A549 (cell line): ENCODE measurements at regions of chr3 and their contacts with region 1.

Region 1: DNA sequence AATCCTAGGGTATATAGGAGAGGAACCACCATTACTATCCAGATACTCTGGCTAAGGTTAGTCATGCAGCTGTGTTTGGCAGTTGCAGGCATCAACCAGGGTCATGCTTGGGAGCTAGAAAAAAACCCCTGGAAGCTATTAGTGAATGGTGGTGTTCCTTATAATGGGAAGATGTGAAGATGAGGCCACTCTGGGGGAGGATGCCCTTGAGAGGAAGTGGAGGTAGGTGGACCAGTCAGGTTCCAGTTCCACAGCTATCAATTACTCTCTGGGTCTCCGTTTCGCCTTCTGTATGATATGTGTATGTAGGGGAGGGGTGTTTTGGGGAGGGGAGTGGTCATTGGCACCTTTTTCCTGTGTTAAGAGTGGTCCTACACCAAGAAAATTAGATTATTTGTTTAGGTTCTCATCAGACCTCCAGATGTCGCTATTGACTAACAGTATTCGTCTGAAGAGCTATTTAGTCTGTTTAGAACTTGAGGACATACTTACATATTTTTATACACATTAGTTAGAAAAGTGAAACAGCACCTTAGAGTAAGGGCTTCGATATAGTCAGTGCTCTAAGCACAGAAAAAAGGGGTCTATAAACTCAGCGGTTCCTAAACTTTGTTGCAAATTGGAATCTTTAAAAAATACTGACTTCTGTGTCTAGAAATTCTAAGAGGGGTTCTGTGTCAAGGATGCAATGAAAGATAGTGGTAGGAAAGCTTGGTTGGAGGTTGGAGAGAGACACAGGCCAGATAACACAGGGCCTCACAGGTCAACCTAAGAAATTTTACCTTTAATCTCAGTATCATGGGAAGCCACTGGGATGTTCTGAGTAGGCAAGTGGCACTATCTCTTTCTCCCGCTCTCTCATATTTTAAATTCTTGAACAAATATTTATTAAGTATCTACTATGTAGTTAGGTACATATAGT is 9.1 kb upstream of the HPS3 start:
- DNase-seq: peak; percentile 73 to 80
- ATAC-seq: peak; percentile 83 to 95
- H3K4me3 ChIP-seq: no peak overlapping the region
- H3K27ac ChIP-seq: peak overlapping the region; percentile 61 to 73
- H3K4me1 ChIP-seq: peaks cover 12% of the 10 kb centered on the region
- CTCF ChIP-seq: peak; percentile 94
- EP300 ChIP-seq: no peak
- POLR2A ChIP-seq: no peak
- RAD21 ChIP-seq: peak; percentile 95 to 97

Region 2: DNA sequence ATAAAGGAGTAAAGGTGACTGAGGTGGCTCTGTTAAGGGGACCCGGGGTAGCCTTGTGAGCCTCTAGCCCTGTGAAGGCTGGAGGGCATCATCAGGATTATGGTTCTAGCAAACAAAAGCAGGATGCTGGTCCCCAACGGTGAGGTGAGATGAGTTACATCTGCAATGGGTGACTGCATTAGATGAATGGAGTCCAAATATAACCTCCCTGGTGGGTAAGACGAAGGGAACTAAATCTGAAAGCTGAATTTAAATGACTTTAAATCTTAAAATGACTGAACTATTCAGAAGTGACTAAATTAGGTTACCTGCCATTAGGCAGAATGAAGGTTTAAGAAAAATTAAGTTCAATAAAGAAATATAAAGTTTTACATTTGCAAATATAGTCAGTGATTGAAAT is 29.4 kb before region 1 on chr3:
- CTCF ChIA-PET with region 1: interaction called, 11 read pairs
- POLR2A ChIA-PET with region 1: no interaction called
- DNase-seq: no peak
- ATAC-seq: no peak
- H3K4me3 ChIP-seq: no peak overlapping the region
- H3K27ac ChIP-seq: no peak overlapping the region
- H3K4me1 ChIP-seq: no peaks in the 10 kb centered on the region
- CTCF ChIP-seq: no peak
- EP300 ChIP-seq: no peak
- POLR2A ChIP-seq: no peak
- RAD21 ChIP-seq: no peak

Region 3: DNA sequence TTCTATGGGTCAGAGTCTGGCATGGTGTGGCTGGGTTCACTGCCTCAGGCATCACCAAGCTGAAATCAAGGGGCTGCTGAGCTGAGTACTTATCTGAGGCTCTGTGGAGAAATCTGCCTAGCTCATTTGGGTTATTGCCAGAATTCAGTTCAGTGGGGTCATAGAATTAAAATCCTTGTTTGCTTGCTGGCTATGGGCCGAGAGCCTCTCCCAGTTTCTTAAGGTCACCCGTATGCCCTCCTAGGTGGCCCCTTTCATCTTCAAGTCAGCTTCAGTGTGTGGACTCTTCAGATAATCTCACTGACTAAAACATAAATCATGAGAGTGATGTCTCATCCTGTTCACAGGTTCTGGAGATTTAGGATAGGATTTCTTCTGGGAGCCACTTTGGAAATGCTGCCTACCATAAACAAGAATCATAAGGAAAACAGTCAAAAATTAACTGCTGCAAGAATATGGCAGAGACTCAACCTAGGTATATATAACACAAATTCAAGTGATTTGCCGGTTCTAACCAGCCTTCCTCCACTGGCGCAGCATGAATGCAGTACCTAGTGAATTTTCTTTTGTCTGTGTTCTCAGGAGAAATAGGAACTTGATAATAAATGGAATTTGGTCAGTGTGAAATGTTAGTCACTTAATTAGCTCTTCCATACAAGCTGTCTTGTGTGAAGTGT is 96.0 kb after region 1 on chr3:
- CTCF ChIA-PET with region 1: interaction called, 10 read pairs
- POLR2A ChIA-PET with region 1: no interaction called
- DNase-seq: peak in 1 of 2 experiments; percentile 93
- ATAC-seq: peak; percentile 82 to 91
- H3K4me3 ChIP-seq: no peak overlapping the region
- H3K27ac ChIP-seq: peak overlapping the region; percentile 62 to 86
- H3K4me1 ChIP-seq: peaks cover 43% of the 10 kb centered on the region
- CTCF ChIP-seq: no peak
- EP300 ChIP-seq: peak; percentile 80 to 92; a peak in 3 of 5 replicates
- POLR2A ChIP-seq: no peak
- RAD21 ChIP-seq: peak in 1 of 2 experiments; percentile 48; a peak in 2 of 5 replicates

Region 4: GRCh38 chr3:149273096-149273751 is 152.9 kb after region 1 on chr3:
- CTCF ChIA-PET with region 1: interaction called, 114 read pairs
- POLR2A ChIA-PET with region 1: no interaction called
- DNase-seq: peak; percentile 62 to 92
- ATAC-seq: peak; percentile 79 to 90
- H3K4me3 ChIP-seq: no peak overlapping the region
- H3K27ac ChIP-seq: peak overlapping the region; percentile 56 to 77
- H3K4me1 ChIP-seq: peaks cover 25% of the 10 kb centered on the region
- CTCF ChIP-seq: peak; percentile 100
- EP300 ChIP-seq: no peak
- POLR2A ChIP-seq: no peak
- RAD21 ChIP-seq: peak; percentile 100

Region 5: GRCh38 chr3:149333176-149333859 is 213.0 kb after region 1 on chr3 and contains the start of gene TM4SF18:
- CTCF ChIA-PET with region 1: interaction called, 29 read pairs
- POLR2A ChIA-PET with region 1: no interaction called
- DNase-seq: peak in 1 of 2 experiments; percentile 36
- ATAC-seq: peak; percentile 26 to 62; a peak in 5 of 6 replicates
- H3K4me3 ChIP-seq: peak within 1 kb of the TSS; percentile 39
- H3K27ac ChIP-seq: peak within 1 kb of the TSS; percentile 91
- H3K4me1 ChIP-seq: peaks cover 67% of the 10 kb centered on the region
- CTCF ChIP-seq: no peak
- EP300 ChIP-seq: no peak
- POLR2A ChIP-seq: no peak
- RAD21 ChIP-seq: no peak
- polyA plus RNA-seq, gene TM4SF18: 99.8 and 123 TPM in 2 replicates

Region 6: GRCh38 chr3:149473357-149474249 is 353.3 kb after region 1 on chr3:
- CTCF ChIA-PET with region 1: interaction called, 23 read pairs
- POLR2A ChIA-PET with region 1: no interaction called
- DNase-seq: peak; percentile 87 to 97
- ATAC-seq: peak; percentile 91 to 94
- H3K4me3 ChIP-seq: peak overlapping the region; percentile 17; the same call in 1 of the 3 replicates
- H3K27ac ChIP-seq: peak overlapping the region; percentile 89 to 93
- H3K4me1 ChIP-seq: peaks cover 78% of the 10 kb centered on the region
- CTCF ChIP-seq: no peak
- EP300 ChIP-seq: peak; percentile 39 to 79; a peak in 2 of 5 replicates
- POLR2A ChIP-seq: no peak
- RAD21 ChIP-seq: peak; percentile 5 to 37; a peak in 3 of 5 replicates